Ovary (tissue), 10 donors: ENCODE measurements at regions of chr3 and their contacts with region 1.

Region 1: GRCh38 chr3:69579306-69580041 is 159.8 kb upstream of the MITF start:
- DNase-seq: no peak
- H3K4me3 ChIP-seq: no peak overlapping the region
- H3K27ac ChIP-seq: no peak overlapping the region
- H3K4me1 ChIP-seq: peaks cover 3% of the 10 kb centered on the region
- H3K27me3 ChIP-seq: no peaks in the 10 kb centered on the region
- CTCF ChIP-seq: no peak
- EP300 ChIP-seq: no peak
- POLR2A ChIP-seq: no peak

Region 2: DNA sequence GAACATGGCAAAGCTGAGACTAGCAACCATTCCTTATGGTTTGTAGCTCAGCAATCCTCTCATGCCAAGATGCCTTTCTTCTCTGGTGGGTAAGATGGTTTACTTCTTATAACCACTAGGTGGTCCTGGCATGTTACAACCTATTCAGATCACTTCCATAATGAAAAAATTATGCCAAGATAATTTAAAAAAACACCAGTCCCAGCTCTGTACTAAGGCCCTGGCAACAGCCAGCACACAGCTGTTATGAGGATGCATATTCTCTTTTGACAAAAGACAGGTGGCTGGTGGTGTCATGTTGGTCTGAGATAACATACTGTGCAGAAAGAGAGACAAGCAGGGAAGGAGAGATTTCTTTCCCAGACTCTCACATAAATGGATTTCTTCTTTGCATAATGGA is 127.9 kb before region 1 on chr3:
- intact Hi-C with region 1: loop called in 1 of 4 experiments (anchors 10 kb)
- DNase-seq: no peak
- H3K4me3 ChIP-seq: no peak overlapping the region
- H3K27ac ChIP-seq: no peak overlapping the region
- H3K4me1 ChIP-seq: peaks cover 4% of the 10 kb centered on the region
- H3K27me3 ChIP-seq: no peaks in the 10 kb centered on the region
- CTCF ChIP-seq: peak in 1 of 3 donors; percentile 17
- EP300 ChIP-seq: no peak
- POLR2A ChIP-seq: no peak